Naive thymus-derived CD4-positive, alpha-beta T cell (primary cell): ENCODE measurements at regions of chr5 and their contacts with region 1.

Region 1: GRCh38 chr5:144203750-144204596 is 33.3 kb downstream of the KCTD16 start:
- DNase-seq: peak in 7 of 9 donors; percentile 12 to 49 (median 38)
- ATAC-seq: peak; percentile 75
- H3K4me3 ChIP-seq: no peak overlapping the region
- H3K4me3 Mint-ChIP-seq: no peak overlapping the region
- H3K27ac ChIP-seq: no peak overlapping the region
- H3K27ac Mint-ChIP-seq: no peak overlapping the region
- H3K4me1 ChIP-seq: no peaks in the 10 kb centered on the region
- H3K4me1 Mint-ChIP-seq: peaks cover 0 to 10% (median 6%) of the 10 kb centered on the region in 7 donors
- H3K27me3 ChIP-seq: peaks cover 0 to 8% of the 10 kb centered on the region in 2 donors
- H3K27me3 Mint-ChIP-seq: peaks cover 51 to 71% (median 56%) of the 10 kb centered on the region in 5 donors

Region 2: DNA sequence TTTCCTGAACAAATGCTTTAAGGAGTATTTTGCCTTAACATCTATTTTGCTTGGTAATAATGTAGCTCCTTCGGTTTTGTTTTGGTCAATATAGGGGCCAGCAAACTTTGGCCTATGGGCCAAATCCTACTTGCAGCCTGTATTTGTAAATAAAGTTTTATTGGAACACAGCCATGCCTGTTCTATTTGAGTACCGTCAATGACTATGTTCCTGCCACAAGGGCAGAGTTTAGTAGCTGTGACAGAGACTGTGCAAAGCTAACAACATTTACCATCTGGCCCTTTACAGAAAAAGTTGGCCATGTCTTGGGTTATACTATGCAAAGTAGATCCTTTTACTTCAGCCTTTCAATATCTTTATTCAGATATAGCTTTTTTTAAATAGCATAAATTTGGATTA is 913.8 kb before region 1 on chr5:
- CTCF ChIA-PET with region 1: no interaction called
- POLR2A ChIA-PET with region 1: no interaction called
- intact Hi-C with region 1: no loop called
- DNase-seq: no peak
- ATAC-seq: no peak
- H3K4me3 ChIP-seq: no peak overlapping the region
- H3K4me3 Mint-ChIP-seq: no peak overlapping the region
- H3K27ac ChIP-seq: no peak overlapping the region
- H3K27ac Mint-ChIP-seq: peak overlapping the region in 1 of 9 donors; percentile 56
- H3K4me1 ChIP-seq: no peaks in the 10 kb centered on the region
- H3K4me1 Mint-ChIP-seq: peaks cover 2 to 13% (median 5%) of the 10 kb centered on the region in 7 donors
- H3K27me3 ChIP-seq: no peaks in the 10 kb centered on the region
- H3K27me3 Mint-ChIP-seq: no peaks in the 10 kb centered on the region

Region 3: DNA sequence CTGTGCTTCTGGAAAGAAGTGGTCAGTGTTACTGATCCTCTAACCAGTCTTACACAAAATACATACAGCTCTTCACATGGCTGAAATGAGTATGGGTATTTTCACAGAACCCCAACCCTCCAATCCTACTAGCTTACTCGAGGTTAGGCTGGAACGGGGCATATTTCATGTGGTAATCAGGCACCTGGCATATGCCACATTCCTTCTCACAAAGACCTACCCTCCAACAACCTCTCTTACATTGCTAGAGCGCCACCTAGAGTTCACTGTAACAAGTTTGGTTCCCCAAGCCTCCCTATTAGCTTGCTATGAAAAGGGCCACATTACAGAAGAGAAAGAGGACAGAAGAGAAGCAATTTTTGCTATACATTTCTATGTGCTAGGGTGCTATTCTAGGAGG is 1033.9 kb after region 1 on chr5:
- CTCF ChIA-PET with region 1: no interaction called
- POLR2A ChIA-PET with region 1: no interaction called
- intact Hi-C with region 1: loop called in 1 of 2 experiments (anchors 2 kb)
- DNase-seq: no peak
- ATAC-seq: no peak
- H3K4me3 ChIP-seq: no peak overlapping the region
- H3K4me3 Mint-ChIP-seq: no peak overlapping the region
- H3K27ac ChIP-seq: no peak overlapping the region
- H3K27ac Mint-ChIP-seq: no peak overlapping the region
- H3K4me1 ChIP-seq: no peaks in the 10 kb centered on the region
- H3K4me1 Mint-ChIP-seq: no peaks in the 10 kb centered on the region
- H3K27me3 ChIP-seq: no peaks in the 10 kb centered on the region
- H3K27me3 Mint-ChIP-seq: no peaks in the 10 kb centered on the region

Region 4: DNA sequence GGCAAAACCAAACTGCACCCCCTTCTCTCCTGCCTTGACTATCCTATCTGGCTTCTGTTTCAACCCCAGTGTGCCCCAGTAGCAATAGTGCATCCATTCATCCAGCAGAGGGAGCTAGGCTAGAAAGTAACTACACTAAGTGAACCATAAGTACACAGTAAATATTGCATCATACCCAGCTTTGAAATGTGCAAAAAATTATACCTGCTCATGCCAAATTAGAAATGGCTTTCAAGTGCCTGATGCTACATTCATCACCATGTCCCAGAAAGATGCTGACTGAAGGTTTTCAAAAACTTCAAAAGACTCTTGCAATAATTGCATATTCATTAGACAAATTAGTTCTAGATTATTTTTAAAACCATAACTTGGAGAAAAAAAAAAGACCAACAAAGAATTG is 1477.7 kb after region 1 on chr5:
- CTCF ChIA-PET with region 1: no interaction called
- POLR2A ChIA-PET with region 1: no interaction called
- intact Hi-C with region 1: loop called in 1 of 2 experiments (anchors 5 kb)
- DNase-seq: peak in 1 of 9 donors; percentile 24
- ATAC-seq: peak; percentile 68
- H3K4me3 ChIP-seq: no peak overlapping the region
- H3K4me3 Mint-ChIP-seq: no peak overlapping the region
- H3K27ac ChIP-seq: no peak overlapping the region
- H3K27ac Mint-ChIP-seq: no peak overlapping the region
- H3K4me1 ChIP-seq: no peaks in the 10 kb centered on the region
- H3K4me1 Mint-ChIP-seq: peaks cover 0 to 2% (median 0%) of the 10 kb centered on the region in 7 donors
- H3K27me3 ChIP-seq: no peaks in the 10 kb centered on the region
- H3K27me3 Mint-ChIP-seq: no peaks in the 10 kb centered on the region

Region 5: DNA sequence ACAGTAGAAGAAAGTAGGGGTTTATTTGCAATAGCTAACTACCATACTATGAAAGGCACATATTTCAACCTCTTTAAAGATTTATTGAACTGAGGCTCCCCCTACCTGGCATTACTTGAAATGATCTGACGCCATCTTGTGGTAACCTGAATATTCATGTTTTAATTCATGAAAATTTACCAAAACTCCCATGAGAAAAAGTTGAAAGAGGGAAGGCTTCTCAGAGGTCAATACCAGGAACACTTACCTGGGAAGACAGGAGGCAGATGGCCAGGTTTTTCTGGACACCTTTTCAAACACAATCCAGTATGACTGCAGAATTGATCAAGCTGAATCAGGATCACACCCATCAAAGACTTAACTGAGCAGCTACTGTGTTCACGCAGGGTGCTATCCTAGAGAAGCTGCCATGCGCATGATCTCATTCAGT is 1621.8 kb after region 1 on chr5:
- CTCF ChIA-PET with region 1: interaction called, 15 read pairs
- POLR2A ChIA-PET with region 1: no interaction called
- intact Hi-C with region 1: loop called in 1 of 2 experiments (anchors 1 kb)
- DNase-seq: peak in 3 of 9 donors; percentile 4 to 7 (median 5)
- ATAC-seq: peak; percentile 50
- H3K4me3 ChIP-seq: no peak overlapping the region
- H3K4me3 Mint-ChIP-seq: no peak overlapping the region
- H3K27ac ChIP-seq: no peak overlapping the region
- H3K27ac Mint-ChIP-seq: no peak overlapping the region
- H3K4me1 ChIP-seq: no peaks in the 10 kb centered on the region
- H3K4me1 Mint-ChIP-seq: peaks cover 0 to 8% (median 0%) of the 10 kb centered on the region in 7 donors
- H3K27me3 ChIP-seq: no peaks in the 10 kb centered on the region
- H3K27me3 Mint-ChIP-seq: peaks cover 0 to 11% (median 0%) of the 10 kb centered on the region in 5 donors

Region 6: DNA sequence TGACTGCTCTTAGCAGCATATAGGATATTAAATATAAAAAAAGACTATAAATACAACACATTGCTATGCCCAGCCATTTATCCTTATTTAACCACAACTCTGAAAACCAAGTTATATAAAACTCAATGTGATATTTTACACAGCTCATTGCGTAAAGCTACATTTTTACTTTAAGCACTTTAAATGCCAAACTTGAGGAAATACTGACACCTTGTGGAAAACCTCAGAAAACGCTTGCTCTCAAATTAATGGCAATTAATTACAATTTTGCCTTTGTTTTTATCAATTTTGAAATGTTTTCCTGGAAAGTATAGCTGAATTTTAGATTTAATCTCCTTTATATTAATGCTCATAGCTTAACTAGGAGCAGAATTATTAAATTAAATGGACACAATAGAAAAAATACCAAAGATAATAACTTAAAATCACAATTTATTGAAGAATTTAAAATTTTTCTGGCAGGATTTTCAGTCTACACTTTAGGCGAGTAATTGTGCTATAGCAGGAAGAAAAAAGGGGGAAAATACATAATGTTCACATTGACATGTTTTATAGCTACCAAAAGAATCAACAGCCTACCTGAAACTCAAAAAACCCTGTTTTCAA is 1926.6 kb after region 1 on chr5:
- CTCF ChIA-PET with region 1: interaction called, 3 read pairs
- POLR2A ChIA-PET with region 1: no interaction called
- intact Hi-C with region 1: loop called (anchors 1 to 10 kb)
- DNase-seq: peak in 3 of 9 donors; percentile 4 to 12 (median 4)
- ATAC-seq: no peak
- H3K4me3 ChIP-seq: no peak overlapping the region
- H3K4me3 Mint-ChIP-seq: no peak overlapping the region
- H3K27ac ChIP-seq: no peak overlapping the region
- H3K27ac Mint-ChIP-seq: no peak overlapping the region
- H3K4me1 ChIP-seq: no peaks in the 10 kb centered on the region
- H3K4me1 Mint-ChIP-seq: peaks cover 0 to 3% (median 0%) of the 10 kb centered on the region in 7 donors
- H3K27me3 ChIP-seq: no peaks in the 10 kb centered on the region
- H3K27me3 Mint-ChIP-seq: no peaks in the 10 kb centered on the region